ENCODE measurements at regions of chr5 and their contacts with region 1.

Region 1: DNA sequence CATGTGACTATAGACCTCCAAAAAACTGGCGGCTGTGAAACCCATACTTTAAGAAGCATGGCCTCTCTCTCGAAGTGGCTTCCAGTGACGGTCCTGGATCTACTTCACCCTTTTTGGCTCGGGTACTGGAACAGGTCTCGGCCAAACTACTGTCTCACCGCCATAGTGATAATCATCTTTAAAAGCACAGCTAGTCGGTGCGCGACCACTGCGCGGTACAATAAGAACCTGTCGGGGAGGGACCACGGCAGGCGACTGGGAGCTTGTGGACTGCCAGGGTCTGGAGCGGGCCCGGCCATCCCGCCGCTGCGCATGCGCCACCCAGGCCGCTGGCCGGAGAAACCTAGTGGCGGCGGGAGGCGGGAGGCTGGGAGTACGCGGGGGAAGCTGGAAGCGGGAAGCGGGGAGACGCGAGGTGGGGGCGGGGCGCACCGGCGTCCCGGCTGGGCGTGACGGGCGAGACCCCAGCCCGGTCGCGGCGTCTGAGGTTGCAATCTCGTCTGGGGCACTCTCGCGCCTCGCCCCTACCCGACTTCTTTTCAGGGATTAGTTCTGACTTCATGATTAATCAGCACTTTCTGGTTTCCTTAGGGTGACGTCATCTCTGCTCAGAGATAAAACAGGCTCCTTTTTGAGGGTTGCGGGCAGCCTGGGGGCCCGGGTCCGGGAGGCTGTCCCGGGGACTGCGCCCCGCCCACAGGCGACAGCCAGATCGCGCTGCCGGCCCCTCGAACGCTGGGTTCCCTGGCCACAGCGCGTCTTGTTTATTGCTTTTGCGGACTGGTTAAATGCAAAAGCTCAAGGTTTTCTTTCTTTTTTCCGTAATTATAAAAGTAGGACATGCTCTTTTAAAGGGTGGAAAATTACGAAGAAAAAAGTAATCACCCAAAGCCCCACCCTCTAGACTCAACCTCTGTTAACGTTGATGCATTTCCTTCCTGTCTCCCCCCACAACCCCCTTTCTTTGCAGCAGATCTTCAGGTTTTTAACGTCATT is 266.8 kb downstream of the CWC27 start:
- DNase-seq: peak; percentile 60 to 92 (median 85)
- ATAC-seq: peak; percentile 88
- H3K4me3 ChIP-seq: peak overlapping the region; percentile 78
- H3K4me3 Mint-ChIP-seq: peak overlapping the region; percentile 74 to 94 (median 82)
- H3K27ac ChIP-seq: peak overlapping the region; percentile 84
- H3K27ac Mint-ChIP-seq: peak overlapping the region; percentile 84 to 96 (median 90)
- H3K4me1 ChIP-seq: peaks cover 20% of the 10 kb centered on the region in 2 donors
- H3K4me1 Mint-ChIP-seq: peaks cover 3 to 36% (median 29%) of the 10 kb centered on the region in 7 donors
- H3K27me3 ChIP-seq: no peaks in the 10 kb centered on the region
- H3K27me3 Mint-ChIP-seq: no peaks in the 10 kb centered on the region

Region 2: DNA sequence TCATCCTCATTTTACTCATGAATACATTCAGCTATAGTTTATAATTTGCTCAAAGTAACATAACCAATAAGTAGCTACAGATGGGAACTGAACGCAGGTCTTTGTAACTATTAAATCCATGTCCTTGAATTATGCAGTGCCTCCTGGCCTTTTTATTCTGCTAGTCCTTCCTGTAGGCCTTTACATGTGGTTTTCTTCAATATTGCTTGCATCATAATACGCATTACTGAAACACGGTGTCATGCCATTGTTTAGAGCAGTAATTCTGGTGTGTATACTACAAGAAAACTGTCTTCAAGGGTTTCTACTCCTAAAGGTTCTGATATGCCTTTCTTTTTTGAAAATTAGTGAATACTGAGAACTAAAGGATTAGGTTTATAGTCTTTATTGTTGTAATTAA is 246.1 kb before region 1 on chr5:
- CTCF ChIA-PET with region 1: no interaction called
- POLR2A ChIA-PET with region 1: no interaction called
- intact Hi-C with region 1: no loop called
- DNase-seq: no peak
- ATAC-seq: no peak
- H3K4me3 ChIP-seq: no peak overlapping the region
- H3K4me3 Mint-ChIP-seq: no peak overlapping the region
- H3K27ac ChIP-seq: no peak overlapping the region
- H3K27ac Mint-ChIP-seq: no peak overlapping the region
- H3K4me1 ChIP-seq: no peaks in the 10 kb centered on the region
- H3K4me1 Mint-ChIP-seq: peaks cover 0 to 7% (median 2%) of the 10 kb centered on the region in 7 donors
- H3K27me3 ChIP-seq: no peaks in the 10 kb centered on the region
- H3K27me3 Mint-ChIP-seq: no peaks in the 10 kb centered on the region

Region 3: GRCh38 chr5:64811050-64811640 is 224.4 kb before region 1 on chr5:
- CTCF ChIA-PET with region 1: no interaction called
- POLR2A ChIA-PET with region 1: no interaction called
- intact Hi-C with region 1: loop called in 1 of 2 experiments (anchors 5 kb)
- DNase-seq: peak in 7 of 9 donors; percentile 1 to 38 (median 21)
- ATAC-seq: peak; percentile 50
- H3K4me3 ChIP-seq: no peak overlapping the region
- H3K4me3 Mint-ChIP-seq: no peak overlapping the region
- H3K27ac ChIP-seq: no peak overlapping the region
- H3K27ac Mint-ChIP-seq: peak overlapping the region in 1 of 9 donors; percentile 33
- H3K4me1 ChIP-seq: no peaks in the 10 kb centered on the region
- H3K4me1 Mint-ChIP-seq: peaks cover 0 to 3% (median 0%) of the 10 kb centered on the region in 7 donors
- H3K27me3 ChIP-seq: no peaks in the 10 kb centered on the region
- H3K27me3 Mint-ChIP-seq: no peaks in the 10 kb centered on the region

Region 4: DNA sequence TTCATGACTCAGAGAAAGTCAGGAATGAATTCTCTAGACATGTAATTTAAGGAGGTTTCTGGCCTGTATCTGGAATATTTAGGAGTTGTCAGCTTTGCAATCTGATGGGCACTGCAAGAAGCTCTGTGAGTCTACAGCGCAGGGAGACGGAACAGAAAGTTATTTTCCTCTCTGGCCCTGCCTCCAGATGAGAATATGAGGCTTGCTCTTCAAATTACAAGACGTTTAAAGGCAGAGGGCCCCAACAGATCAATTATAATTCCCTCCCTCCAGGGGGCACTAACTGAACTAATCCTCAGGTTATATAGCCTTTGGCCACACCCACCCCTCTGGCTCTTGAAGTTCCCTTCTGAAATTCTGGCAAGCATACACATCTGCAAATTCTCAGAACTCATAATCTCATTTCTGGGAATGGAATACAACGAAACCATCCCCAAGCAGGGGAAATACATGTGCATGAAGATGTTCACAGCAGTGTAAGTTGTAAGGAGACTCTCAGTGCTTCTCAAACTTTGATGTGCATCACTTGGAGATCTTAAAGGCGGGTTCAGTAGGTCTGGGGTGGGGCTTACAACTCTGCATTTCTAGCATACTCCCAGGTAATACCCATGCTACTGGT is 40.9 kb after region 1 on chr5:
- CTCF ChIA-PET with region 1: no interaction called
- POLR2A ChIA-PET with region 1: no interaction called
- intact Hi-C with region 1: loop called in 1 of 2 experiments (anchors 2 kb)
- DNase-seq: peak in 8 of 9 donors; percentile 26 to 66 (median 46)
- ATAC-seq: peak; percentile 89
- H3K4me3 ChIP-seq: no peak overlapping the region
- H3K4me3 Mint-ChIP-seq: no peak overlapping the region
- H3K27ac ChIP-seq: no peak overlapping the region
- H3K27ac Mint-ChIP-seq: peak overlapping the region in 5 of 9 donors; percentile 2 to 78 (median 39)
- H3K4me1 ChIP-seq: no peaks in the 10 kb centered on the region
- H3K4me1 Mint-ChIP-seq: peaks cover 2 to 23% (median 17%) of the 10 kb centered on the region in 7 donors
- H3K27me3 ChIP-seq: no peaks in the 10 kb centered on the region
- H3K27me3 Mint-ChIP-seq: peaks cover 0 to 17% (median 0%) of the 10 kb centered on the region in 5 donors

Region 5: DNA sequence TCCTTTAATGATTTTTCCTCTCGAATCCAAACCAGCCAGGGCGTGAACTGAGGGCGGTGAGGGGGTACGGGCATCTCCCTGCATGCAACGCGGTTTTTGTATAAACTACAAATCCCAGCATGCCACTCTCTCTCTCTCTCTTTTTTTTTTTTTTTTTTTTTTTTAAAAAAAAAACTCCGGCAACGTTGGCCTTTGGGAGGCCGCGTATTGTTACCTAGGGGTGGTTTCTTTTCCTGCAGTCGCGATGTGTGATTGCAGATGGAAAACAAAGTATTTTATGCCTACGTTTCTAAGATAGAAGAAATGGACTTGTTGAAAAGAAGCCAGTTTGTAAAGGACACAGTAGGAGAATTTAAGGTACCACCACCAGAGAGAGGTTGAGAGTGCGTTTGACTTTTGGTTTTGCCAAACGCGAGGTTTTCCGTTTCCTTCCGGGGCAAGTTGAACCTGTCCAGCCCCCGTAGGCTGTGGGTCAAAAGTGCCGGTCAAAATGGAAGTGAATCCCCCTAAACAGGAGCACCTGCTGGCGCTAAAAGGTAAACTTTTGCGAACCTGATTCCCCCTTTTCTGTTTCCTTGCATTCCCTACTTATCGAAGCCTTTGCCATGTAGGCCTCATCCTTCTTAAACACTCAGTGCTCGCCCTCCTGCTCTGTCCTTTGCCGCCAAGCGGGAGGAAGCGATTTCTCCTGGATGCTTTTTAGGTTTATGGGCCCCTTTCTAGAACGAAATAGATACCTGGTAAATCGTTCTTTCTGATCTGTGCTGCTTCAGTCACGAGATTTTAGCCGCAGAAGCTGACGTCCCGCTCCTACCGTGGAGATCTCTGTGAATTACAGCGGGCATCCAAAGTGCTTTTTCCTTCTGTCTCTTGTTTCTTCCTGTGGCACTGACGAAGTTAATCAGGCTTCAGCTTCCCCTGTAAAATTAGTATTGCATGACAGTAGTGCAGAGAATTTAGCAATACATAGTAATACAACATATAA is 589.4 kb after region 1 on chr5 and contains the starts of genes SHLD3 and TRAPPC13:
- CTCF ChIA-PET with region 1: no interaction called
- POLR2A ChIA-PET with region 1: interaction called, 4 read pairs
- intact Hi-C with region 1: loop called (anchors 1 to 2 kb)
- DNase-seq: peak; percentile 57 to 92 (median 91)
- ATAC-seq: peak; percentile 86
- H3K4me3 ChIP-seq: peak within 1 kb of the TSS; percentile 75
- H3K4me3 Mint-ChIP-seq: peak within 1 kb of the TSS; percentile 93 to 100 (median 98)
- H3K27ac ChIP-seq: peak within 1 kb of the TSS; percentile 92
- H3K27ac Mint-ChIP-seq: peak within 1 kb of the TSS; percentile 97 to 100 (median 98)
- H3K4me1 ChIP-seq: peaks cover 20% of the 10 kb centered on the region in 2 donors
- H3K4me1 Mint-ChIP-seq: peaks cover 14 to 73% (median 51%) of the 10 kb centered on the region in 7 donors
- H3K27me3 ChIP-seq: no peaks in the 10 kb centered on the region
- H3K27me3 Mint-ChIP-seq: peaks cover 0 to 3% (median 0%) of the 10 kb centered on the region in 5 donors
- total RNA-seq, gene SHLD3: 4.8 to 11.3 (median 5.8) TPM
- total RNA-seq, gene TRAPPC13: 18.2 to 23.1 (median 20.8) TPM